ENCODE measurements at regions of chr15 and their contacts with region 1.

Region 1: GRCh38 chr15:68672781-68673205 is 94.0 kb downstream of the CORO2B start:
- DNase-seq: no peak
- H3K4me3 ChIP-seq: no peak overlapping the region
- H3K27ac ChIP-seq: no peak overlapping the region
- H3K4me1 ChIP-seq: no peaks in the 10 kb centered on the region
- H3K27me3 ChIP-seq: peaks cover 0 to 10% of the 10 kb centered on the region in 2 experiments
- CTCF ChIP-seq: peak in 1 of 2 donors; percentile 30
- POLR2A ChIP-seq: no peak

Region 2: DNA sequence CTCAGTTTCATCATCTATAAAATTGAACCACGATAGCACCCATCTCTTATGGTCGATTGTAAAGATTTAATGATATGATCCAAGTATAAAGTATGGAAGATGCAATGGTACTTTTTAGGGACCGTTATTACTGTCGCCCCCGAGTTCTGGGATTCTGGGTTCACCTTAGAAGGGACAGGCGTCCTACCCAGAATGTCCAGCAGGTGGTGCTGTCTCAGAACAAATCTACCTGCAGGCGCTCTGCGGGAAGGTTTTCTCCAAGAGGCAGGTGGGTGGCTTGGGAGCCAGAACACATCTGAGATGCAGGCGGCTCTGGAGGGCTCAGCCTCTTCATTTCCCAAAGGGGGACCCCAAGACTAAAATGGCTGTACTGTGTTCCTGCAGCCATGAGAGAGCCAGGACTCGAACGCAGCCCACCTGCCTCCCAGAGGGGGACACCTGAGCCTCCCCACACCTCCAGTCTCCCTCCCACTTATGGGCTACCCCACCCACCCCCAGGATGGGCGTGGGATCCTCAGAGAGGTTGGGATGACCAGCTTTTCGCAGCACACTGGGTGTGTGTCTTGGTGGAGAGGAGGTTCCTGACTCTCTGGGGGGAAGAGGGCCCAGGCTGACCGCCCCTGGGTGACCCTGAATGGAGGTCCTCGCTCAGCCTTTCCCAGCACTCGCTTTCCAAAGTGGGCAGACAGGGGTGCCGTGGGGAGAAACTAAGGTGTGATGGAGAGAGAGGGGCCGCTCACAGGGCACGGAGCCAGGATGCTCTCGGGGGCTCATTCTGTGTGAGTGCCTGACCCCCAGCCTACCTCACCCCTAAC is 122.1 kb before region 1 on chr15:
- CTCF ChIA-PET with region 1: interaction called, 728 read pairs
- POLR2A ChIA-PET with region 1: no interaction called
- dilution Hi-C with region 1: no loop called
- intact Hi-C with region 1: loop called (anchors 1 kb)
- DNase-seq: peak; percentile 41
- H3K4me3 ChIP-seq: no peak overlapping the region
- H3K27ac ChIP-seq: no peak overlapping the region
- H3K4me1 ChIP-seq: peaks cover 8% of the 10 kb centered on the region
- H3K27me3 ChIP-seq: peaks cover 5% of the 10 kb centered on the region in 2 experiments
- CTCF ChIP-seq: peak; percentile 80 to 87
- POLR2A ChIP-seq: no peak

Region 3: GRCh38 chr15:68578174-68578979 is 94.4 kb before region 1 on chr15:
- CTCF ChIA-PET with region 1: interaction called, 24 read pairs
- POLR2A ChIA-PET with region 1: no interaction called
- dilution Hi-C with region 1: no loop called
- intact Hi-C with region 1: loop called (anchors 1 kb)
- DNase-seq: peak; percentile 66
- H3K4me3 ChIP-seq: peak overlapping the region; percentile 30 to 44 (median 35)
- H3K27ac ChIP-seq: no peak overlapping the region
- H3K4me1 ChIP-seq: peaks cover 9% of the 10 kb centered on the region
- H3K27me3 ChIP-seq: peaks cover 19 to 28% of the 10 kb centered on the region in 2 experiments
- CTCF ChIP-seq: peak; percentile 25 to 67
- POLR2A ChIP-seq: no peak

Region 4: GRCh38 chr15:68650901-68651709 is 21.7 kb before region 1 on chr15:
- CTCF ChIA-PET with region 1: interaction called, 54 read pairs
- POLR2A ChIA-PET with region 1: no interaction called
- dilution Hi-C with region 1: no loop called
- intact Hi-C with region 1: loop called (anchors 1 kb)
- DNase-seq: peak; percentile 45
- H3K4me3 ChIP-seq: no peak overlapping the region
- H3K27ac ChIP-seq: no peak overlapping the region
- H3K4me1 ChIP-seq: no peaks in the 10 kb centered on the region
- H3K27me3 ChIP-seq: peaks cover 0 to 4% of the 10 kb centered on the region in 2 experiments
- CTCF ChIP-seq: peak; percentile 93 to 96
- POLR2A ChIP-seq: no peak

Region 5: GRCh38 chr15:68691705-68692104 is 18.9 kb after region 1 on chr15:
- CTCF ChIA-PET with region 1: interaction called, 11 read pairs
- POLR2A ChIA-PET with region 1: no interaction called
- dilution Hi-C with region 1: no loop called
- intact Hi-C with region 1: no loop called
- DNase-seq: no peak
- H3K4me3 ChIP-seq: no peak overlapping the region
- H3K27ac ChIP-seq: no peak overlapping the region
- H3K4me1 ChIP-seq: no peaks in the 10 kb centered on the region
- H3K27me3 ChIP-seq: peaks cover 9% of the 10 kb centered on the region in 2 experiments
- CTCF ChIP-seq: no peak
- POLR2A ChIP-seq: no peak

Region 6: GRCh38 chr15:68875377-68876116 is 202.8 kb after region 1 on chr15:
- CTCF ChIA-PET with region 1: interaction called, 100 read pairs
- POLR2A ChIA-PET with region 1: no interaction called
- dilution Hi-C with region 1: no loop called
- intact Hi-C with region 1: loop called (anchors 1 kb)
- DNase-seq: peak; percentile 91
- H3K4me3 ChIP-seq: peak overlapping the region in 2 of 3 experiments; percentile 6 to 24
- H3K27ac ChIP-seq: no peak overlapping the region
- H3K4me1 ChIP-seq: no peaks in the 10 kb centered on the region
- H3K27me3 ChIP-seq: peaks cover 7 to 9% of the 10 kb centered on the region in 2 experiments
- CTCF ChIP-seq: peak; percentile 83 to 84
- POLR2A ChIP-seq: no peak